Dorsolateral prefrontal cortex (tissue), 120 donors: ENCODE measurements at regions of chr10 and their contacts with region 1.

Region 1: GRCh38 chr10:125060826-125061556 is 99.4 kb downstream of the CTBP2 start:
- DNase-seq: peak; percentile 83 to 92 (median 90)
- H3K4me3 ChIP-seq: peak overlapping the region in 55 of 59 donors; percentile 3 to 54 (median 29)
- H3K27ac ChIP-seq: peak overlapping the region; percentile 48 to 95 (median 84)
- H3K27me3 ChIP-seq: no peaks in the 10 kb centered on the region
- CTCF ChIP-seq: peak; percentile 82 to 97 (median 92)

Region 2: DNA sequence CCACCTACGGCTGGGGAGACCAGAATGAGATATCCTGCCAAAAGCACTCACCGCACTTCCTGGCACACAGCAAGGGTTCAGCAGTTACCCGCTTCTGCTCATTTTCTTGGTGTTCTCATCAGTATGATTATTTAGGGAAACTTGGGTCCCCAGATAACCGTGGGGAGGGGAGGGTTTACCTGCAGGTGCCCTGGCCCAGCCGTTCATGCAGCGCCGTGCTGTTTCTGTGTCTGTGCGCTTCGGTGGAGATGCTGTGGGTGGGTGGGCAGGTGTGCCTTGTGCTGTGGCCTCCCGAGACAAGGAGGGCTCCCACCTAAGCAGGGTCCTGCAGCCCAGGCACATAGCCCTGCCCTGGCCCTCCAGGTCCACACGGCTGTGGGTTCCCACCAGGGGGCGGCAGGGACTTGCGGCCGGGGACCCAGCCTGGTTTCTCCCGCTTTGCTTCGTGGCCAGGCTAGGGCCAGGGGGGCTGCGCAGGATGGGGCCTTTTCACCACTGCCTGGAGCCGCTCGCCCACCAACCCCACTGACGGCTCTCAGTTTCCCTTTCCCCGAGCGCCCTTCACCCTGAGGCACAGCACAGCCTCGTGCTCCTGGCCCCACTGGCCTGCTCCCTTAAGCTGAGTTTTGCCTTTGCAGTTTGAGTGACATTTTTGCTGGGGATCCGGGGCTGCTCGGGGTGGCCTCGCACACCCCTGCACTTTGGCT is 520.9 kb before region 1 on chr10:
- intact Hi-C with region 1: loop called in 1 of 2 experiments (anchors 10 kb)
- DNase-seq: peak in 7 of 10 donors; percentile 55 to 81 (median 63)
- H3K4me3 ChIP-seq: no peak overlapping the region
- H3K27ac ChIP-seq: peak overlapping the region in 27 of 59 donors; percentile 3 to 79 (median 42)
- H3K27me3 ChIP-seq: no peaks in the 10 kb centered on the region
- CTCF ChIP-seq: peak; percentile 16 to 93 (median 72)

Region 3: DNA sequence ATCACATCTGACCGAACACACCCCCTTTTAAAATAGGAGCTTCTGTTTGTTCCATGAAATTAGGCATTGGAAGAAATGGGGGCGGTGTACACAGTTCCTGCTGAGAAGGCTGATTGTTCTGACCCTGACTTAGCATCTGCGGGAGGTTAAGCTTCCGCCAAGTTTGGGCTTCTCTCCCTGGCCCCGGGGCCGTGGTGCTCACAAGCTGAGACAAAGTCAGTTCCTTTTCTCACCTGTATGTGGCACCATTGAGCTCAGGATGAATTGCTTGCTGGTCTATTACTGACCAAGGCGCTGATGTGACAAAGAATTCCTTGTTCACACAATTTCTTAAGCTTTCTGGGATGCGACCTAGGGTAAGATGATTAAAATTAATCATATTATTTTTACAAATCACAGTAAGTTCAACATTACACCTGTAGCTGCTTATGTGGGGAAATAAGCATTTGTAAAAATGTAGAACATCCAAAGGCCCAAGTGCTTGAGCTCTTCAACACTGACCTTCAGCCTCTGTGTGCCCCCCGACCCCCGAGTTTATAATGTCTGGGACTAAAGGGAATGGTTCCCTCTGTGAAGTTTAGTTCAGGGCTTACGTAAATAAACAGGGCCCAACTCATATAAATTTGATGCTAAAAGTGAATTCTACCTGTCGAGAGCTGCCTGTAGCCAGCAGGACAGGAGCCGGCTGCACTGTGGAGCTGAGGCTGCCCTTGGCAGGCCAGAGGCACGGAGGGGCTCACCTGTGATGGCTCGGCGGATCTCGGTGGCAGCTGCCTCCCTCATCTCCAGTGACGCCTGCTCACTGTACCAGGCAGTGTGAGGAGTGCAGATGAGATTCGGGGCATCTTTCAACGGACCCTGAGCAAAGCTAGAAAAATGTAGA is 68.3 kb before region 1 on chr10:
- intact Hi-C with region 1: loop called in 1 of 2 experiments (anchors 2 kb)
- DNase-seq: peak in 6 of 10 donors; percentile 63 to 81 (median 72)
- H3K4me3 ChIP-seq: no peak overlapping the region
- H3K27ac ChIP-seq: peak overlapping the region in 55 of 59 donors; percentile 1 to 95 (median 79)
- H3K27me3 ChIP-seq: no peaks in the 10 kb centered on the region
- CTCF ChIP-seq: peak; percentile 59 to 91 (median 83)

Region 4: DNA sequence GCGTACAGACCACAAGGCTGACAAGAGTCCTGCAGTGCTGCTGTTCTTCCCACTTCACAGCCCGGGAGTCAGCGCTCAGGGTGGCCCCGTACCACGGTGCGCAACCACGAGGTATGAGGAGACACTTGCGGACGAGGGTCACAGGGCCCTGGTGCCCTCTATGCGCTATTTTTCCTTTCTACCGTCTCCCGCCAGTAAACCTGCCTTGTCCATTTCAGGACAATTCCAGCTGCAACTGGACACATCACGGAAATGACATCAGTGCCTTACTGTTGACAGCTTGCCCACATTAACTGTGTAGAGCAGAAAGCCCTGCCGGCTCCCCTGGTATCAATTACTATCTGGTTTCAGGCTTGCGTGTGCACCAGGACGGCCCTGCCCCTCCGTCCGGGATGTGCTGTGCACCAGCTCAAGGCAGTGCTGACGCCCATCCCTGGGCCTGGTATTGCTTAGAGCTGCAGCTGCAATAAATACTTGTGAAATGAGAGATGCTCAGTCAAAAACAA is 54.0 kb before region 1 on chr10:
- intact Hi-C with region 1: loop called in 1 of 2 experiments (anchors 2 kb)
- DNase-seq: peak in 5 of 10 donors; percentile 31 to 62 (median 38)
- H3K4me3 ChIP-seq: peak overlapping the region in 1 of 59 donors; percentile 11
- H3K27ac ChIP-seq: peak overlapping the region; percentile 26 to 99 (median 85)
- H3K27me3 ChIP-seq: no peaks in the 10 kb centered on the region
- CTCF ChIP-seq: no peak

Region 5: GRCh38 chr10:125023862-125024489 is 37.0 kb before region 1 on chr10:
- intact Hi-C with region 1: no loop called
- DNase-seq: peak in 4 of 10 donors; percentile 55 to 77 (median 66)
- H3K4me3 ChIP-seq: peak overlapping the region; percentile 1 to 61 (median 41)
- H3K27ac ChIP-seq: peak overlapping the region; percentile 18 to 90 (median 71)
- H3K27me3 ChIP-seq: no peaks in the 10 kb centered on the region
- CTCF ChIP-seq: no peak

Region 6: DNA sequence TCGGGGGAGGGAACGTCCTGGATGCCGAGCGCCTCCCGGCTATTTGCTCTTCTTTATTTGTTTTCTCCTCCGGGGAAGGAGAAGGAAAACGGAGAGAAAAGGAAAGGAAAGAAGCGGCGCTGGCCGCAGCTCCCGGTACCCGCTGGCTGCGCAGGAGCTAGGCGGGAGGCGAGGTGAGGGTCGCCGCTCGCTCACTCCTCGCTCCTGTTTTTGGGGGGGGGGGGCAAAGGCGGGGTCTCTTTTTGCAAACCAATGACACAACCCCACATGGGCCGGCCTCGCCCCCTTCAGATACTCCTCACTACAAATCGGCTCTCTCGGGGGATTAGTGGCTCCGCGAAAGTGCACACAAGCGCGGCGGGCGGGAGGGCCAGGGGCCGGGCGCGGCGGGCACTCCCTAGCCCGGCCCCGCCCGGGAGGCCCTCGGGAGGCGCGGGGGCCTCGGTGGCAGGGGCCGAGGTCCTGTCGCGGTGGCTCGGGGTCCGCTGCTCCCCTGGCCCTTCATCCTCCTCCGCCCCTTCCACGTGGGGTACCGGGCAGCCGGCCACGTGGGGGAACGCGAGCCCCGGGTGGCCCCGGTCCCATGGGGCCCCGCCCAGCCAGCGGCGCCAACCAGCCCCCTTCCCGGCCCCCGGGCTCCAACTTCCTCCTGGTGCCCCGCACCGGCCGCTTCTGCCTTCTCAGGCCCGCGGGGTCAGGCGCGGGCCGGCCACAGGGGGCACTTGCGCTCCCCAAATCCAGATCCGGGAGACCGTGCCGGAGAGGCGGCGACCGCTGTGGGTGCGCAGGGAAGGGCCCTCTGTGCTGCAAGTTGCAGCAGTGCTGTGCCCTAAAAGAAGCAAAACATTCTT is 100.1 kb after region 1 on chr10:
- intact Hi-C with region 1: loop called (anchors 2 to 5 kb)
- DNase-seq: peak in 9 of 10 donors; percentile 49 to 79 (median 67)
- H3K4me3 ChIP-seq: peak overlapping the region; percentile 48 to 87 (median 75)
- H3K27ac ChIP-seq: peak overlapping the region in 57 of 59 donors; percentile 36 to 98 (median 86)
- H3K27me3 ChIP-seq: no peaks in the 10 kb centered on the region
- CTCF ChIP-seq: peak in 54 of 56 donors; percentile 11 to 75 (median 54)